MCF 10A (cell line): ENCODE measurements at regions of chr12 and their contacts with region 1.

Region 1: GRCh38 chr12:31506515-31507306 is 84.2 kb downstream of the DENND5B start:
- DNase-seq: no peak
- H3K4me3 Mint-ChIP-seq: no peak overlapping the region
- H3K27ac Mint-ChIP-seq: peak overlapping the region; percentile 21
- H3K4me1 Mint-ChIP-seq: peaks cover 25% of the 10 kb centered on the region
- H3K27me3 Mint-ChIP-seq: no peaks in the 10 kb centered on the region
- CTCF ChIP-seq: no peak

Region 2: DNA sequence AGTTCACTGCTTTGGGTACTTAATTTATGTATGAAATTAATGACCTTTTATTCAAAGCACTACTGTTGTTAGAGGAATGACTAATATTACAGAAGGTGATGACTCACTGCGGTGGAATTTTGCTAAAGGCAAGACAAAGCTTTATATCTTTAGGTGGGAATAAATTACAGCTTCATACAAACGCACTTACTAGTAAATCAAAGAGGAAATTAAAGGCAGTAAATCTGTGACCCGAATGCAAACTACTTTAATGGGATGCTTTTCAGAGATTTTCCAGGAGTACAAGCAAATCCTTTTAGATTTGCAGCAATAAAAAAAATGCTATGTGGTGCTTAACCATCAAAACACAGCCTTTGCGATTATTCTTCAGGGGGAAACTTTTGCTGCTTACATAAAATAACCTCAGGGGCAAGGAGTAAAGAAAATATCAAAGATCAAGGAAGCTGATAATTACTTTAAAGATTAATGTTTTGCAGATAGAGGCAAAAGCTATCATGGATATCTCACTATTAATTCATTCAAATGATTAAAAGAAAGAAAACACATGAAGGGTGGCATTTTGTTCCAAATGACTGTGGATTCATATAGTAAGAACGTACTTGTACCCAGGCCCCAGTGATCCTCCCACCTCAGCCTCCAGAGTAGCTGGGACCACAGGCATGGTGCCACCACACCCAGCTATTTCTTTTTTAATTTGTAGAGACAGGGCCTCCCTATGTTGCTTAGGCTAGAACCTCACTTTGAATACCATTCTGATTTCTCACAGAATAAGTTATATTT is 14.7 kb before region 1 on chr12:
- CTCF ChIA-PET with region 1: interaction called, 4 read pairs
- POLR2A ChIA-PET with region 1: interaction called, 24 read pairs
- intact Hi-C with region 1: no loop called
- DNase-seq: peak; percentile 89
- H3K4me3 Mint-ChIP-seq: peak overlapping the region; percentile 53
- H3K27ac Mint-ChIP-seq: peak overlapping the region; percentile 67
- H3K4me1 Mint-ChIP-seq: peaks cover 38% of the 10 kb centered on the region
- H3K27me3 Mint-ChIP-seq: no peaks in the 10 kb centered on the region
- CTCF ChIP-seq: no peak